Colonic mucosa (tissue), 4 donors: ENCODE measurements at regions of chr21 and their contacts with region 1.

Region 1: DNA sequence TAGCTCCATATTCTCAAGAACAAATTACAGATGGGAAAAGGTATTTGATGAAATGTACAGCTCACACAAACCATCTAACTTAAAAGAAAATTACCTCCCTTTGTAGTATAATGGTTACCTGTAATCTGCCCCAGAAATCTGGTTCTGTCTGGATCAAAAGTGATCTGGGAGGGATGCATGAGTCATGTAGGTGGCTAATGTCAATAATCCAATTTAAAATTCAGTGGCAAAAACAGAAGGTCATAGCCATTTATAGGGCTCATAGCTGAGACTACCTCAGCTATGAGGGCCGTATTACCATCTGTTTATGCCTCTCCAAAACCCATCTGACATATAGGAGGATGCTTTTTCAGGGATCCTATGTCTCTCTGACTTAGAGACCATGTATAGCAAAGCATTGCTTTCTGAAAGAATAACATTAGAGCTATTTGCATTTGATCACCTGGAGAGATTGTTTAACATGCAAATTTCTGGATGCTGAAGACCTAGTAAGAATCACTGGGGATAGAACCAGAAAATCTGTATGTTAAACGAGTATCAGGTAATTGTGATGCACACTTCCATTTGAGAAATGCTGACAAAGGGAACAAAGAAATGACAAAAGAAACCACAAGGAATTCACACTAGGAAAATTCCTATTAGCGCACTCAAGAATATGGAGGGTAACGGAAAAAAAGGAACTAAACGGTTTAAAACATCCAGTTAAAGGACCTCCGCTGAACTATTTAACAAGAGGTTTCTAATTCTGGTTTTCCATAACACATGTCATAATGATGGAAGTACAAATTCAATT is 17.5 kb downstream of the PAXBP1 start:
- DNase-seq: no peak
- H3K4me3 ChIP-seq: no peak overlapping the region
- H3K27ac ChIP-seq: no peak overlapping the region
- H3K4me1 ChIP-seq: no peaks in the 10 kb centered on the region
- H3K27me3 ChIP-seq: no peaks in the 10 kb centered on the region
- CTCF ChIP-seq: no peak

Region 2: GRCh38 chr21:32653311-32653901 is 100.6 kb before region 1 on chr21:
- intact Hi-C with region 1: loop called (anchors 10 kb)
- DNase-seq: no peak
- H3K4me3 ChIP-seq: no peak overlapping the region
- H3K27ac ChIP-seq: no peak overlapping the region
- H3K4me1 ChIP-seq: no peaks in the 10 kb centered on the region
- H3K27me3 ChIP-seq: no peaks in the 10 kb centered on the region
- CTCF ChIP-seq: peak; percentile 51